ENCODE measurements at regions of chr22 and their contacts with region 1.

Region 1: GRCh38 chr22:36387752-36388518 is at the start of gene MYH9:
- DNase-seq: peak; percentile 98
- ATAC-seq: peak; percentile 67
- H3K4me3 ChIP-seq: peak within 1 kb of the TSS; percentile 88
- H3K27ac ChIP-seq: peak within 1 kb of the TSS; percentile 90
- H3K4me1 ChIP-seq: peaks cover 23% of the 10 kb centered on the region
- H3K27me3 ChIP-seq: no peaks in the 10 kb centered on the region
- CTCF ChIP-seq: no peak
- total RNA-seq, gene MYH9: 357 and 546 TPM in 2 replicates

Region 2: GRCh38 chr22:34490886-34491285 is 1897.0 kb before region 1 on chr22:
- CTCF ChIA-PET with region 1: no interaction called
- POLR2A ChIA-PET with region 1: no interaction called
- intact Hi-C with region 1: no loop called
- DNase-seq: no peak
- ATAC-seq: no peak
- H3K4me3 ChIP-seq: no peak overlapping the region
- H3K27ac ChIP-seq: no peak overlapping the region
- H3K4me1 ChIP-seq: no peaks in the 10 kb centered on the region
- H3K27me3 ChIP-seq: no peaks in the 10 kb centered on the region
- CTCF ChIP-seq: no peak

Region 3: DNA sequence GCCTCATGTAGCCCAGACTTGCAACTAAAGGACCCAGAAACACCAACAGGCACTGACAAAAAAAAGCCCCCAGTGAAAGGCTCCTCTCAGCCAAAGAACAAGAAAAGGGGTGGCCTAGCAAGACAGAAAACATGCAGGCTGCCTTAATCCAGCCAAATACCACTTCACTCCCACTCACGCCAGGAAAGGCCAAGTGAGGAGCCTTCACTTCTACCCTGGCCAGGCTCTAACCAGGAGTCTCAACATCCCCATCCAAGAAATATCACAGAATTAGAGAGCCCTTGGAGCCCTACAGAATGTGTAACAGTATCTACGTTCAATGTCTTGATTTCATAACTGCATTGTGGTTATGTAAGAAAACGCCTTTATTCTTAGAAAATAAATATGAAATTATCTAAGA is 521.3 kb before region 1 on chr22:
- CTCF ChIA-PET with region 1: no interaction called
- POLR2A ChIA-PET with region 1: no interaction called
- intact Hi-C with region 1: no loop called
- DNase-seq: no peak
- ATAC-seq: no peak
- H3K4me3 ChIP-seq: no peak overlapping the region
- H3K27ac ChIP-seq: no peak overlapping the region
- H3K4me1 ChIP-seq: no peaks in the 10 kb centered on the region
- H3K27me3 ChIP-seq: no peaks in the 10 kb centered on the region
- CTCF ChIP-seq: no peak

Region 4: GRCh38 chr22:36267896-36268485 is 119.9 kb before region 1 on chr22:
- CTCF ChIA-PET with region 1: no interaction called
- POLR2A ChIA-PET with region 1: interaction called, 12 read pairs
- intact Hi-C with region 1: no loop called
- DNase-seq: no peak
- ATAC-seq: no peak
- H3K4me3 ChIP-seq: no peak overlapping the region
- H3K27ac ChIP-seq: no peak overlapping the region
- H3K4me1 ChIP-seq: no peaks in the 10 kb centered on the region
- H3K27me3 ChIP-seq: no peaks in the 10 kb centered on the region
- CTCF ChIP-seq: no peak

Region 5: GRCh38 chr22:36301384-36301828 is 86.5 kb before region 1 on chr22:
- CTCF ChIA-PET with region 1: no interaction called
- POLR2A ChIA-PET with region 1: no interaction called
- intact Hi-C with region 1: loop called (anchors 5 kb)
- DNase-seq: peak; percentile 74
- ATAC-seq: peak; percentile 62
- H3K4me3 ChIP-seq: no peak overlapping the region
- H3K27ac ChIP-seq: peak overlapping the region; percentile 22; the same call in 1 of the 2 replicates
- H3K4me1 ChIP-seq: peaks cover 36% of the 10 kb centered on the region
- H3K27me3 ChIP-seq: no peaks in the 10 kb centered on the region
- CTCF ChIP-seq: peak; percentile 90

Region 6: GRCh38 chr22:36331306-36331911 is 56.5 kb before region 1 on chr22:
- CTCF ChIA-PET with region 1: no interaction called
- POLR2A ChIA-PET with region 1: no interaction called
- intact Hi-C with region 1: loop called (anchors 2 kb)
- DNase-seq: peak; percentile 96
- ATAC-seq: peak; percentile 58
- H3K4me3 ChIP-seq: peak overlapping the region; percentile 33; the same call in 1 of the 2 replicates
- H3K27ac ChIP-seq: peak overlapping the region; percentile 97
- H3K4me1 ChIP-seq: peaks cover 78% of the 10 kb centered on the region
- H3K27me3 ChIP-seq: no peaks in the 10 kb centered on the region
- CTCF ChIP-seq: no peak

Region 7: GRCh38 chr22:36350751-36351594 is 37.0 kb before region 1 on chr22:
- CTCF ChIA-PET with region 1: no interaction called
- POLR2A ChIA-PET with region 1: no interaction called
- intact Hi-C with region 1: no loop called
- DNase-seq: peak; percentile 48
- ATAC-seq: no peak
- H3K4me3 ChIP-seq: no peak overlapping the region
- H3K27ac ChIP-seq: peak overlapping the region; percentile 77
- H3K4me1 ChIP-seq: peaks cover 42% of the 10 kb centered on the region
- H3K27me3 ChIP-seq: no peaks in the 10 kb centered on the region
- CTCF ChIP-seq: 0 out of 2 replicates have a peak, but pooled peaks have one; percentile 18

Region 8: GRCh38 chr22:36409911-36410756 is 22.2 kb after region 1 on chr22:
- CTCF ChIA-PET with region 1: interaction called, 9 read pairs
- POLR2A ChIA-PET with region 1: no interaction called
- intact Hi-C with region 1: loop called (anchors 1 kb)
- DNase-seq: peak; percentile 97
- ATAC-seq: peak; percentile 94
- H3K4me3 ChIP-seq: peak overlapping the region; percentile 43
- H3K27ac ChIP-seq: peak overlapping the region; percentile 84
- H3K4me1 ChIP-seq: peaks cover 25% of the 10 kb centered on the region
- H3K27me3 ChIP-seq: no peaks in the 10 kb centered on the region
- CTCF ChIP-seq: no peak

Region 9: GRCh38 chr22:36452250-36452977 is 64.5 kb after region 1 on chr22:
- CTCF ChIA-PET with region 1: no interaction called
- POLR2A ChIA-PET with region 1: interaction called, 4 read pairs
- intact Hi-C with region 1: loop called (anchors 2 kb)
- DNase-seq: no peak
- ATAC-seq: no peak
- H3K4me3 ChIP-seq: no peak overlapping the region
- H3K27ac ChIP-seq: peak overlapping the region; percentile 32
- H3K4me1 ChIP-seq: peaks cover 29% of the 10 kb centered on the region
- H3K27me3 ChIP-seq: no peaks in the 10 kb centered on the region
- CTCF ChIP-seq: no peak

Region 10: GRCh38 chr22:36470162-36470993 is 82.4 kb after region 1 on chr22:
- CTCF ChIA-PET with region 1: no interaction called
- POLR2A ChIA-PET with region 1: interaction called, 8 read pairs
- intact Hi-C with region 1: loop called (anchors 5 kb)
- DNase-seq: peak; percentile 84
- ATAC-seq: peak; percentile 53
- H3K4me3 ChIP-seq: no peak overlapping the region
- H3K27ac ChIP-seq: no peak overlapping the region
- H3K4me1 ChIP-seq: peaks cover 58% of the 10 kb centered on the region
- H3K27me3 ChIP-seq: no peaks in the 10 kb centered on the region
- CTCF ChIP-seq: peak; percentile 82

Region 11: GRCh38 chr22:36901411-36902142 is 513.6 kb after region 1 on chr22:
- CTCF ChIA-PET with region 1: no interaction called
- POLR2A ChIA-PET with region 1: no interaction called
- intact Hi-C with region 1: no loop called
- DNase-seq: no peak
- ATAC-seq: no peak
- H3K4me3 ChIP-seq: no peak overlapping the region
- H3K27ac ChIP-seq: no peak overlapping the region
- H3K4me1 ChIP-seq: no peaks in the 10 kb centered on the region
- H3K27me3 ChIP-seq: peaks cover 26% of the 10 kb centered on the region
- CTCF ChIP-seq: no peak